PC-9 (cell line): ENCODE measurements at regions of chr20 and their contacts with region 1.

Region 1: DNA sequence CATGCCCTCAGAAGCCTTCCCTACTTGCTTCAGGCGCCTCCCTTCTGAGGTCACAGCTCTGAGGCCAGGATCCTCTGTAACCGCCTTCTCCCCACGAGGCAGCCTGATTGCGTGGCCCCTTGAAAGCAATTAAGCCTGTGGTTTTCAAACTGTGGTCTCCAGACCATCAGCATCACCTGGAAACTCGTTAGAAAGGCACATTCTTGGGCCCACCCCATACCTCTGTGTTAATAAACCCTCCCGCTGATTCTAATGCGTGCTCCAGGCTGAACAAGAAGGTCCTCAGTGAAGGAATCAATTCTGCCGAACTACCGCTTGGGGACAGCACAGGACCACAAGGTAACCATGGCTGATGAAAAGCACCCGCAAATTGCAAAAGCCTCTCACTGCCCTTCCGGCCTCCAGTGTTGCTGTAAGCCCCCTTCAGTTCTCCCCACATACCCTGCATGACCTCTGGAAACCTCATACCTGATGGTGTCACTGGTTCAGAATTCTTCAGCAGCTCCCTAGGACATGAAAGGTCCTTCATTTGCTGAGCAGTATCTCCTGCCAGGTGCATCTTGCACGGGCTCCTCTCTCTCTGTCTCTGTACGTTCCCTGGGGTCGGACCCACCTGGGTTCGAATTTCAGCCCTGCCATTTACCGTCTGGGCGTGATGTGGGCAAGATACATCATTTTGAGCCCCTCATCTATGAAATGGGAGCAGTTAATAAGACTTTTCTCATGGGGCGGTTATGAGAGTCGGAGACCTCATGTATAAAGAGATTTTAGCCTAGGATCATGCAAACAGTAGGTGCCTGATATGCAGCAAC is 93.3 kb upstream of the RNF24 start:
- DNase-seq: peak; percentile 68 to 72
- H3K4me3 ChIP-seq: no peak overlapping the region; the same call in 1 of the 2 replicates
- H3K27ac ChIP-seq: peak overlapping the region; percentile 65
- H3K4me1 ChIP-seq: peaks cover 40% of the 10 kb centered on the region
- H3K27me3 ChIP-seq: no peaks in the 10 kb centered on the region
- CTCF ChIP-seq: peak; percentile 97

Region 2: DNA sequence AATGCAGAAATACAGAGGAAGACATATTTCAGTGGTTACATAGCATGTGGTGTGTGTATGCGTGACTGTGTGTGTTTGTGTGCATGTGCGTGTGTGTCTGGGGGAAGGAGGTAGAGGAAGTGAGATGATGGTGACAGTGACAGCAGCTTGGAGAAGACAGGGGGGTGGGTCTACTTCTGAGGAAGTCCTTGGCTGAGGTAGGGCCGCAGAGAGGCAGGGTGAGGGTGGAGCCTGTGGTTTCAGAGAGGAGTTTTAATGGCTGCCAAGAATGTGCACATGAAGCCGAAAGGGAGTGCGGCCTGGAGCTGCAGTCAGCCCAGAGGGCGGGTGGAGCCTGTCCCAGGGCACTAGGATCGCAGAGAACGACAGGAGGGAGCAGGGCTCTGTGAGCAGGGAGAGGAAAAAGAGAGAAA is 70.6 kb before region 1 on chr20:
- CTCF ChIA-PET with region 1: no interaction called
- POLR2A ChIA-PET with region 1: no interaction called
- intact Hi-C with region 1: no loop called
- DNase-seq: peak; percentile 70 to 81
- H3K4me3 ChIP-seq: no peak overlapping the region
- H3K27ac ChIP-seq: no peak overlapping the region
- H3K4me1 ChIP-seq: peaks cover 41% of the 10 kb centered on the region
- H3K27me3 ChIP-seq: no peaks in the 10 kb centered on the region
- CTCF ChIP-seq: no peak

Region 3: GRCh38 chr20:4095639-4096038 is 13.1 kb before region 1 on chr20:
- CTCF ChIA-PET with region 1: no interaction called
- POLR2A ChIA-PET with region 1: no interaction called
- intact Hi-C with region 1: no loop called
- DNase-seq: peak in 1 of 2 experiments; percentile 25
- H3K4me3 ChIP-seq: no peak overlapping the region
- H3K27ac ChIP-seq: no peak overlapping the region
- H3K4me1 ChIP-seq: no peaks in the 10 kb centered on the region
- H3K27me3 ChIP-seq: no peaks in the 10 kb centered on the region
- CTCF ChIP-seq: no peak

Region 4: DNA sequence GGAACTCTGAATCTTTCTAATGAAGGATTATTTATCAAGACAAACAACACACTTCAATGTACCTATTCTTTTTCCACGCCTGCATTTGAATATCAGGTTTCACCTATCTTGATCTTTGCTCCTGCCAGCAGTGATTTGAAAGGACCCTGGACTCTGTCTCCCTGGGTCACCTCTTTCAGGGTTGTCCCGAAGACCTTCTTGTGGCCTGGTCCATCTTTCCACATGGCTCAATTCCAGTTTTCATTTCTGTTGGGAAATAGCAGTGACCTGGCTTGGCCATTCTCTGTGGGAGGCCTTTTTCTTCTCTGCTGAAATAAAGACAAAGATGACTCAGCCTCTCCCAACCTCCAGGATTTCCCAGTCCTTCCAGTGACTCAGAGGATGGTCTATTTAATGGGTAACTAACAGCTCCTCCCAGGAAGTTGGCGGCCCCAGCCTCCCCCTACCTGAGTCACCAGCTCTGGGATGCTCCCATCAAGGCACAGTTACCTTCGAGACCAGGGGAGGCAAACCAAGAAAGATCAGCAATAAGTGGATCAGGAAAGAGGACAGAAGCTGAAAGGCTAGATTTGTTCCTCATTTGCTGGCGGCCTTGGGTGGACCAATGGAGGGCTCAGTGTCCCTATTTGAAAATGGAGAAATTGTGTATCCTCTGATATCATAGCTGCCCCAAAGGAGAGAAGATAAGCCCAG is 26.8 kb after region 1 on chr20:
- CTCF ChIA-PET with region 1: interaction called, 4 read pairs
- POLR2A ChIA-PET with region 1: interaction called, 3 read pairs
- intact Hi-C with region 1: loop called (anchors 1 kb)
- DNase-seq: peak; percentile 84 to 97
- H3K4me3 ChIP-seq: no peak overlapping the region
- H3K27ac ChIP-seq: peak overlapping the region; percentile 75
- H3K4me1 ChIP-seq: peaks cover 60% of the 10 kb centered on the region
- H3K27me3 ChIP-seq: no peaks in the 10 kb centered on the region
- CTCF ChIP-seq: no peak

Region 5: DNA sequence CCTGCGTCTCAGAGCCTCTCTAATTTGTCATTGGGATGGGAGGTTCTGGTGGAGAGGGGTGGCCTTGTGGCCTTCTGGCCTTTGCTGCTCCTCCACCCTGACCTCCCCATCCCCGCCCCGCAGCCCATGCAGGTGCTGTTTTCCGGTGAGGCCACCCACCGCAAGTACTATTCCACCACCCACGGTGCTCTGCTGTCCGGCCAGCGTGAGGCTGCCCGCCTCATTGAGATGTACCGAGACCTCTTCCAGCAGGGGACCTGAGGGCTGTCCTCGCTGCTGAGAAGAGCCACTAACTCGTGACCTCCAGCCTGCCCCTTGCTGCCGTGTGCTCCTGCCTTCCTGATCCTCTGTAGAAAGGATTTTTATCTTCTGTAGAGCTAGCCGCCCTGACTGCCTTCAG is 78.4 kb after region 1 on chr20:
- CTCF ChIA-PET with region 1: no interaction called
- POLR2A ChIA-PET with region 1: no interaction called
- intact Hi-C with region 1: no loop called
- DNase-seq: no peak
- H3K4me3 ChIP-seq: no peak overlapping the region
- H3K27ac ChIP-seq: no peak overlapping the region
- H3K4me1 ChIP-seq: peaks cover 8% of the 10 kb centered on the region
- H3K27me3 ChIP-seq: no peaks in the 10 kb centered on the region
- CTCF ChIP-seq: no peak

Region 6: DNA sequence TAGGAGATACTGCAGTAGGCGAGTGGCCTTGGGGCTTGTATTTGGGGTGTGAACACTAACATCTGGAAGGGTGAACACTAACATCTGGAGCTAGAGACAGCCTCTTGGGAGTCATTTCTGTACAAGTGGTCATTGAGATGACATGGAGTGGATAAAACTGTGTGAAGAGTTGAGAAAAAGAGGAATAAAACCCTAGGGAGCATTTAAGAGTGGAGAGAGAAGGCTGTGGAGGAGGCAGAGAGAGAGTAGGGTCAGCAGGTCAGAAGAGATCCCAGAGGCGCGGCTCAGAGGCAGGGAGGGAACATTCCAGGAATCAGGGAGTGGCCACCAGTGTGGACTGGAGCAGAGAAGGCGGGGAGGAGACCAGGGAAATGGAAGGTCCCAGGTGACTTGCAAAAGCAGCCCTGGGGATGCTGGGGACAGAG is 108.7 kb after region 1 on chr20:
- CTCF ChIA-PET with region 1: interaction called, 16 read pairs
- POLR2A ChIA-PET with region 1: no interaction called
- intact Hi-C with region 1: no loop called
- DNase-seq: peak; percentile 44 to 67
- H3K4me3 ChIP-seq: no peak overlapping the region
- H3K27ac ChIP-seq: no peak overlapping the region
- H3K4me1 ChIP-seq: peaks cover 16% of the 10 kb centered on the region
- H3K27me3 ChIP-seq: no peaks in the 10 kb centered on the region
- CTCF ChIP-seq: no peak

Region 7: DNA sequence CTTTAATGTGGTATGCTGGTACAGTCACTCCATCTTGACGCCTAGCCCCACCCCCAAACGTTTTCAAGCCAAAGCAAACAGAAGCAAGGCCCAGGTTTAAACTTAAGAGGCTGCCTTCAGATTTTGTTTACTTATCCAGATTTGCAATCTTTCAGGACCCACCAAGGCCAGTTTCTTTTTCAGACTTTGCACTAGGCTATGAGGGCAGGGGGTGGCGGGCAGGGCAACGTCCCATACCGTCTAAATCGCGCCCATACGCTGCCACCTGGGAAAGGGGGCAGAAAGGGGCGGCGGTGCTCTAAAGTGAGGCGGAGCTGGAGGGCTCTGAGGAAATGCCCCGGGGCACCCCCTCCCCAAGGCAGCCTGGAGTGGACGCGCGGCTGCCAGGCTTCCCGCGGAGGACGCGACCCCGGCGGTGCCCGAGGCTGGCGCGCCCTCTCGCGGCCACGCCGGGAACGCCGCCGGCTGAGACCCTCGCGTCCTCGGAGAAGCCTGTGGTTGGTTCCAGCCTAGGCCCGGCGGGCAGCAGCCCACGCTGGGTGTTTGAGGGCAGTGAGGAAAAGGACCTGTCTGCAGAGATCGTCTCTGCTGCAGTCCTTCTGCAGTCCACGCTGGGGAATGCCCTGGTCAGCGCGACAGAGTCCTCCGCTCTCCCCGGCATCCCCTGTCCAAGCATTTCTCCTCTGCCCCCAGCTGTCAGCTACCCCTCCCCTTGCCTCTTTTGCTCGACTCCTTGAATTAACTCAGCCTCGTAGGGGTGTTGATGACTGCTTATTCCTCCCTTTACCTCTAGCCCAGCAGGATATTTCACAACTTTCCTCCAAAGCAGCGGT is 483.8 kb after region 1 on chr20:
- CTCF ChIA-PET with region 1: no interaction called
- POLR2A ChIA-PET with region 1: no interaction called
- intact Hi-C with region 1: loop called (anchors 2 kb)
- DNase-seq: peak in 1 of 2 experiments; percentile 67
- H3K4me3 ChIP-seq: peak overlapping the region; percentile 48; the same call in 1 of the 2 replicates
- H3K27ac ChIP-seq: no peak overlapping the region
- H3K4me1 ChIP-seq: peaks cover 5% of the 10 kb centered on the region; the same call in 1 of the 2 replicates
- H3K27me3 ChIP-seq: no peaks in the 10 kb centered on the region
- CTCF ChIP-seq: peak; percentile 89

Region 8: GRCh38 chr20:4720041-4720976 is 611.6 kb after region 1 on chr20:
- CTCF ChIA-PET with region 1: no interaction called
- POLR2A ChIA-PET with region 1: no interaction called
- intact Hi-C with region 1: loop called (anchors 2 kb)
- DNase-seq: peak; percentile 49 to 67
- H3K4me3 ChIP-seq: no peak overlapping the region; the same call in 1 of the 2 replicates
- H3K27ac ChIP-seq: no peak overlapping the region
- H3K4me1 ChIP-seq: peaks cover 11% of the 10 kb centered on the region
- H3K27me3 ChIP-seq: no peaks in the 10 kb centered on the region
- CTCF ChIP-seq: peak; percentile 84